RWPE1 (cell line): ENCODE measurements at regions of chr5 and their contacts with region 1.

Region 1: DNA sequence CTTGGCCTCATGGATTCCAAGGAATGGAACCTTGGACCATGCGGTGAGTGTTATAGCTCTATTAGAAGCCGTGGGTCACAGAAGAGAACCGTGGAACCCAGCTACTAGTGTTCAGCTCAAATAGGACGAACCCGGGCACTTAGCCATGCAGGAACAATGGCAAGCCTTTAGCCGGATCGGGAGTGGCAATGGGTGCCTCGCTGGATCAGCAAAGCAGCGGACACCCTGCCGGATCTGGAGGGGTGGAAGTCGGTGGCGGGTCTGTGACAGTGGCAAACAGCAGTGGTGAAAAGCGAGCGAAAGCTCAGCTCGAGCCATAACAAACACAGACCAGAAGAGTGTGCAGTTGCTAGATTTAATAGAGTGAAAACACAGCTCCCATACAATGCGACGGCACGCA is 2.4 kb upstream of the CDO1 start:
- DNase-seq: no peak
- H3K27ac ChIP-seq: no peak overlapping the region
- CTCF ChIP-seq: no peak

Region 2: DNA sequence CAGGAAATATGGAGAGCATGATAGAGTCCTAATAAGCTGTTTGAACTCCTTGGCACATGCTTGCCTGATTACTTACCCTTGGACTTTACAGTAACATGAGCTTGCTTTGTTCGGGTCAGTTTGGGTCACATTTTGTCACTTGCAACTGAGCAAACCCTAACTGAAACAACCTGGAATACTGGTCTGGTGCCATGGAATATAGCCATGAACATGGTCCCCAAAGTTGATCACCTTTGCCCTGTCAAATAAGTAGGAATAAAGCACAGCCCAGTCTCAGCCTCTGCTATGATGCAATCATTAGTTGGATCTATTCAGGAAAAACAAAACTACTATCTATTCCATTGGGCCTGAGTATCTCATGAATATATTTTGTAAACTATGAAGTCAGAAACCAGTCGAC is 20.6 kb before region 1 on chr5:
- CTCF ChIA-PET with region 1: no interaction called
- POLR2A ChIA-PET with region 1: no interaction called
- DNase-seq: no peak
- H3K27ac ChIP-seq: no peak overlapping the region
- CTCF ChIP-seq: no peak

Region 3: DNA sequence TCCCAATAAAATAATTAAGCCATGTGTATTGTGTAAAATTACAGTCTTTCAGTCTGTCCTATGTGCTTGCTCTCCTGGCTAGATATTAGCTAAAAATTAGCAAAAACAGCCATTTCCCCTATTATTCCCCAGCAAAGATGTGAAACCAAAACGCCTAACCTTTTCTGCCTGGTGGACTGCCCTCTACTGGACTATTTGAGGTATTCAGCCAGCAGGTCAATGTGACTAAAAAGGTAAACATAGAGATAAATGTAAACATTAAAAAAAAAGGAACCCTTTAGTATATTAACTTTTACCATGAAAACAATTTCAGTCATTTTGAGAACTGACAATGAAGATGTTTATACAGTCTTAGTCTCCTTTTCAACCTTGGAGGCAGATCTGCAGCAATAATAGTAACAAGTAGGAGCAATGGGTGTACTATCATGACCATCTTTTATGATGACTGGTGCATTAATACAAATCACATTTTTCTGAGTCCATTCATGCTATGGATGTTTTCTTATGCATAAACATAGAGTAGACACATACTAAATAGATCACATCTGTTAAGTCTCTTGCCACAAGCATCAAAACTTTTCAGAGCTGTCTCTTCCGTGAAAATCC is 12.4 kb after region 1 on chr5:
- CTCF ChIA-PET with region 1: interaction called, 10 read pairs
- POLR2A ChIA-PET with region 1: no interaction called
- DNase-seq: peak; percentile 51
- H3K27ac ChIP-seq: no peak overlapping the region
- CTCF ChIP-seq: peak; percentile 66